ENCODE measurements at regions of chr14 and their contacts with region 1.

Region 1: DNA sequence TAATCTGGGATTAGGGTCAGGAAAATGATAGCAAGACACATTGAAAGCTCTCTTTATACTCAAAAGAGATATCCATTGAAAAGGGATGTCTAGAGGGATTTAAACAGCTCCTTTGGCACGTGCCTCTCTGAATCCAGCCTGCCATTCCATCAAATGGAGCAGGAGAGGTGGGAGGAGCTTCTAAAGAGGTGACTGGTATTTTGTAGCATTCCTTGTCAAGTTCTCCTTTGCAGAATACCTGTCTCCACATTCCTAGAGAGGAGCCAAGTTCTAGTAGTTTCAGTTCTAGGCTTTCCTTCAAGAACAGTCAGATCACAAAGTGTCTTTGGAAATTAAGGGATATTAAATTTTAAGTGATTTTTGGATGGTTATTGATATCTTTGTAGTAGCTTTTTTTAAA is 25.4 kb upstream of the PLEKHD1 start:
- DNase-seq: no peak
- ATAC-seq: no peak
- H3K4me3 ChIP-seq: no peak overlapping the region
- H3K27ac ChIP-seq: no peak overlapping the region
- H3K4me1 ChIP-seq: no peaks in the 10 kb centered on the region
- H3K27me3 ChIP-seq: no peaks in the 10 kb centered on the region
- CTCF ChIP-seq: no peak

Region 2: GRCh38 chr14:69242311-69243224 is 216.6 kb before region 1 on chr14:
- intact Hi-C with region 1: loop called in 2 of 3 experiments (anchors 5 to 10 kb)
- DNase-seq: peak in 2 of 6 donors; percentile 39 to 74
- ATAC-seq: peak; percentile 72 to 95 (median 88)
- H3K4me3 ChIP-seq: no peak overlapping the region
- H3K27ac ChIP-seq: no peak overlapping the region
- H3K4me1 ChIP-seq: no peaks in the 10 kb centered on the region
- H3K27me3 ChIP-seq: no peaks in the 10 kb centered on the region
- CTCF ChIP-seq: peak; percentile 42 to 74 (median 70)

Region 3: DNA sequence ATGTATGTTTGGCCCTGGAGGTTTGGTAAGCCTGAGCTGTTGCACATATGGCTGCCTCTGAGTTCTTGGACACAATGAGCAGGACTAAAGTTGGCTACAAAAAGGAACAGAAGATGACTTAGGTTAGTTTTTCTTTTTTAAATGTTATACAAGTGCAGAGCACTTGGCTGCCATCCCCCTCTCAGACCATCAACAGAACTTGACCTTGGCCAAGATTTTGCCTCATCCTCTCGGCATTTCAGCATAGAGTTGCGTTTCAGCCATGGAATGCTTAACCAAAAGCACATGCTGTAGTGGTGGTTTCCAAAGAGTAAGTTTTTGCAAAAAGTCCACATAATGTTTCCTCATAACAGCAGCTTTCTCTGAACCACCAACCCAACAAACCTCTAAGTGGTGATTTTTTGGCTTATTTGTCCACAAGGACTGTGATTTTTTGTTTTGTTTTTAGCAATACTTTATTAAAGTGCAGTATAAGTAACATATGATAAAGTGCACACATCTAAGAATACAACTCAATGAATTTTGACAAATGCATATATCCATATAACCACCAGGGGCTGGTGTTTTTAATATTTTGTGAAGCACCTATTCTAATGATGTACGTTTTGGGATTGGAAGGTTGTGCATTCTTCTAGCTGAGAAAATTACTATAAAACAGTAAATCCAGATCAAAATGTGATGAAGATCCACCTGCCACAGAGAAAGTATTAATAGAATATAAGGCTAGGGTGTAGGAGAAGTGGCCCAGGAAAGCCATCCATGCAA is 211.3 kb before region 1 on chr14:
- intact Hi-C with region 1: loop called in 2 of 3 experiments (anchors 5 to 10 kb)
- DNase-seq: no peak
- ATAC-seq: peak in 3 of 4 donors; percentile 43 to 67 (median 58)
- H3K4me3 ChIP-seq: no peak overlapping the region
- H3K27ac ChIP-seq: no peak overlapping the region
- H3K4me1 ChIP-seq: no peaks in the 10 kb centered on the region
- H3K27me3 ChIP-seq: no peaks in the 10 kb centered on the region
- CTCF ChIP-seq: peak in 1 of 4 donors; percentile 25

Region 4: GRCh38 chr14:69535230-69535848 is 76.2 kb after region 1 on chr14:
- intact Hi-C with region 1: no loop called
- DNase-seq: peak in 3 of 6 donors; percentile 5 to 63 (median 38)
- ATAC-seq: peak in 3 of 4 donors; percentile 71 to 78 (median 77)
- H3K4me3 ChIP-seq: no peak overlapping the region
- H3K27ac ChIP-seq: no peak overlapping the region
- H3K4me1 ChIP-seq: no peaks in the 10 kb centered on the region
- H3K27me3 ChIP-seq: peaks cover 0 to 6% (median 0%) of the 10 kb centered on the region in 4 donors
- CTCF ChIP-seq: peak in 3 of 4 donors; percentile 21 to 33 (median 25)

Region 5: GRCh38 chr14:69657950-69658355 is 198.8 kb after region 1 on chr14:
- intact Hi-C with region 1: no loop called
- DNase-seq: peak; percentile 49 to 77 (median 54)
- ATAC-seq: peak; percentile 70 to 87 (median 86)
- H3K4me3 ChIP-seq: no peak overlapping the region
- H3K27ac ChIP-seq: peak overlapping the region in 3 of 4 donors; percentile 3 to 81 (median 73)
- H3K4me1 ChIP-seq: peaks cover 29 to 67% (median 36%) of the 10 kb centered on the region in 3 donors
- H3K27me3 ChIP-seq: no peaks in the 10 kb centered on the region
- CTCF ChIP-seq: no peak